Calu3 (cell line): ENCODE measurements at regions of chr4 and their contacts with region 1.

Region 1: DNA sequence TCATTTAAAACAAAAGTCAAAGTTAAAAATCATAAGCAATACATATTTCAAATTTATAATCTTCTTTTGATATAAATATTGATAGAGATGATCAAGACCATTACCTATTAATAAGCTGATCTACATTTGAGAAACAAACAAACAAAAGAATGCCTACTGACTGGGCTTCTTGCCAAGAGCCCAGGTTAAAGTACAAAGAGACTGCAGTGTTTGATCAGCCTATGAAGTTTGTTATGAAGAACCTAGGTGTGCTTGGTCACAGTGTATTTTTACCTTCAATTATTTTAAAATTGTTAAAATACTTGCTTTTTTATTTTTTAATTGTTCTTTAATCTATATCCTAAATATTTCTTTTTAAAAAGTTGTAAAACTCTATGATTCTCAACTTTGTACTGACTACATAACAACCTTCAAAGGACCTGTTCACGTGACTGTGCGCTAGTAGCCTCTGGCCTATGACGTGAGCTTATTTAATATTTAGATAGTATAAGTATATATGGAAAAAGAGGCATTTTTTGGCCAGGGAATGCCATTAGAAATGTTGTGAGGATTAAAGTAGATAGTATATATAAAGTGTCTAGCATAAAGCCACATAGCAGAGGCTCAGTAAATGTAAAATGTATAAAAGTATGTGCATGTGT is 11.4 kb upstream of the SLC39A8 start:
- DNase-seq: no peak
- H3K4me3 Mint-ChIP-seq: no peak overlapping the region
- H3K27ac Mint-ChIP-seq: no peak overlapping the region
- H3K4me1 Mint-ChIP-seq: no peaks in the 10 kb centered on the region
- H3K27me3 Mint-ChIP-seq: no peaks in the 10 kb centered on the region
- CTCF ChIP-seq: no peak

Region 2: DNA sequence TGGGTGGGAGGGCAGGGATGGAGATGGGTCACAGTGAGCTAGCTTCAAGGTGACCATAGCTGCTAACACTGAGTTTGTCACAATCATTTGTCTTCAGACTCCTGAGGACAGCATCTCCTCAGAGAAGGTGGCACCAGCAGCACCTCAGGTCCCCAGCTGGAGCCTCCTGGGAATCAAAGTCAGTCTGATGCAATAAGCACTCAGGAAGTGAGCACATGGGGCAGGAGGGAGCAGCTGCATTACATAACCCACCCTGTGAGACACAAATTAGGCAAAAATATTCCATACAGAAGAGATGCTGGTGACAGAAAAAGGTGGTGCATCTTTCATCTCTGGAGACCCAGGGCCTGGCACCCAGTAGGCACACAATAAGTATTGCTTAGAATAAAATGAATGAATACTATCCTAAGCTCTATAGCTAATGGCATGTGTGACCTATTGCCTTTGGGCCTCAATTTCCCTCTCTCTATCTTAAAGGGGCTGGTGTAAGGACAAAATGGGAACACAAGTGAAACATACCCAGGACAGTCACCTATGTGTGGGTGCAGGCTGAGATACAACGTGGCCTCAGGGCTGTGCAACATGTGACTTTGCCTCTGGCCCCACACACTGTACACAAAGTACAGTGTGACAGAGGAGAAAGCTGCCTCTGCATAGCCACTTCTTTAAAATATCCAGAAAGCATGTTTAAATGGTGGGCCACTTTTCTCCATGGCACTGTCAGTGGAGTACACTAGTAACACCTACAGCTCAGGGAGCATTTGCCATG is 48.5 kb before region 1 on chr4:
- CTCF ChIA-PET with region 1: no interaction called
- intact Hi-C with region 1: no loop called
- DNase-seq: no peak
- H3K4me3 Mint-ChIP-seq: no peak overlapping the region
- H3K27ac Mint-ChIP-seq: no peak overlapping the region
- H3K4me1 Mint-ChIP-seq: no peaks in the 10 kb centered on the region
- H3K27me3 Mint-ChIP-seq: no peaks in the 10 kb centered on the region
- CTCF ChIP-seq: no peak

Region 3: GRCh38 chr4:102390438-102390837 is 33.8 kb after region 1 on chr4:
- CTCF ChIA-PET with region 1: no interaction called
- intact Hi-C with region 1: loop called (anchors 5 kb)
- DNase-seq: no peak
- H3K4me3 Mint-ChIP-seq: no peak overlapping the region
- H3K27ac Mint-ChIP-seq: no peak overlapping the region
- H3K4me1 Mint-ChIP-seq: peaks cover 8% of the 10 kb centered on the region
- H3K27me3 Mint-ChIP-seq: no peaks in the 10 kb centered on the region
- CTCF ChIP-seq: no peak

Region 4: GRCh38 chr4:102586644-102587021 is 230.0 kb after region 1 on chr4:
- CTCF ChIA-PET with region 1: no interaction called
- intact Hi-C with region 1: no loop called
- DNase-seq: no peak
- H3K4me3 Mint-ChIP-seq: no peak overlapping the region
- H3K27ac Mint-ChIP-seq: no peak overlapping the region
- H3K4me1 Mint-ChIP-seq: no peaks in the 10 kb centered on the region
- H3K27me3 Mint-ChIP-seq: no peaks in the 10 kb centered on the region
- CTCF ChIP-seq: no peak